ENCODE measurements at regions of chr21 and their contacts with region 1.

Region 1: DNA sequence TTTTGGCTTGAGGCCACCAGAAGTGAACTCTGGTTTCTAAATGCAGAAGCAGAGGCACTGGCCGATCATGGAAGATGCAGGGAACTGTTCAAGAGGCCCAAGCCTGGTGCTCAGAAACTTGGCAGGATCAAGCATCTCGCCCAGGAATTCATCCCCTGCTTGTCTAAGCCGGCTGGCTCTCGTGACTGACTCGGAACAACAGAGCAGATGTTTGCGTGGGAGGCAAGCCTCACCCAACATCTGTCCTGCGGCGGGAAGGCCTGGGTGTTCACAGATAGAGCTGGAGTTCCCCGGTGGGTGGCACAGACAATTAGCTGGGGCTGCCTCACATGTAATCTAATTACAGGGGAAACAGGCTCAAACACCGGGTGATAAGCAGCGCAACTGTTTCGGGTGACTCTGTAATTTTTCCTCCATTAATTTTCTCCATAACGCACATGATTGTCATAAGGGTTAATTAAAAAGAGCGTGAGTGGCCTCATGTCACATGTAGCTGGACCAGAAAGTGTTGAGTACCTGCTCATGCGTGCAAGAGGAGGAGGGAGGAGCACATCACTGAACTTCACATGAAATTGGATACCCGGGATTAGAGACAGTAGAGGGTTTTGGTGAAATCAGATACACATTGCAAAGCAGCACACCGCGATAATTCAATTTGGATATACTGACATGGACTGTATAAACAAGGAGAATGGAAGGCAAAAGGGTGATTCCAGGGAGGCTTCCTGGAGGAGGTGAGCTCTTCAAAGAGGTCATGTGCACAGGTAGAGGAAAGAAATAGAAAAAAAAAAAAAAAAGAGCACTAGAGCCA is 180.0 kb downstream of the ETS2 start:
- DNase-seq: peak; percentile 88
- H3K4me3 Mint-ChIP-seq: peak overlapping the region; percentile 69
- H3K27ac Mint-ChIP-seq: peak overlapping the region; percentile 91
- H3K4me1 Mint-ChIP-seq: peaks cover 39% of the 10 kb centered on the region
- H3K27me3 Mint-ChIP-seq: peaks cover 4% of the 10 kb centered on the region

Region 2: DNA sequence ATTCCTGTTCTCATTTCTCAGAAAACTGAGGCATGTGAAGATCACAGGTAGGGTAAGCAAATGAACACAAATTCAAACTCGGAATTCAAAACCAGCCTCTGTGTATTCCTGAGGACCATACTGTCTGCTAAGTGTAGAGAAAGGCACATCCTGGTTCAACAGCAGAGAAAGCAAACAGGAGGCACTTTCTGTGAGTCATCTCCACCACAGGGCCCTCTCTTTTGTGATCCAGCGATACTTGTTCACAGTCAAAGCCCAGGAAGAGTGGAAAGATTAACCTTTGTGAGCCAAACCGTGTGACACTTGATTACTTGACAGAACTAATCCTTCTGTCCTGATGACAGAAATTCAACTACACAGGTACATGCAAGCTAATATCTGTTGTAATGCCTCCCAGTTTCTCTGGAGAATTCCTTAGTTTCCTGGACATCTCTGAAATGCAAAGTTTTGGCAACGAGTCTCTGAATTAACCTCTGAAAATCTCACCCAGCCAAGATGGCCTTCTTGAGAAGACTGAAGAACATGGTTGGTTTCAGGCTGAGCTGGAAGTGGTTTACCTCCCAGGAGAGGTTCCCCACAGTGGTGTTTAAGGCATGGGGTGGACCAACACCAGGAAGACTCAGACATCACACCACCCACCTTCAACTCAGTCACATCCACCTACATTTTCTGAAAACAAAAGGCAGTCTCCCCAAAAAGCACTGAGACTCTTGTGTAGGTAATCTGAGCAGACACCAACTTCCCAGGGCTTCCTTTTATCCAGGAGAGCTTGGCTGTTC is 389.3 kb before region 1 on chr21:
- intact Hi-C with region 1: no loop called
- DNase-seq: no peak
- H3K4me3 Mint-ChIP-seq: no peak overlapping the region
- H3K27ac Mint-ChIP-seq: peak overlapping the region; percentile 57
- H3K4me1 Mint-ChIP-seq: peaks cover 3% of the 10 kb centered on the region
- H3K27me3 Mint-ChIP-seq: peaks cover 16% of the 10 kb centered on the region

Region 3: DNA sequence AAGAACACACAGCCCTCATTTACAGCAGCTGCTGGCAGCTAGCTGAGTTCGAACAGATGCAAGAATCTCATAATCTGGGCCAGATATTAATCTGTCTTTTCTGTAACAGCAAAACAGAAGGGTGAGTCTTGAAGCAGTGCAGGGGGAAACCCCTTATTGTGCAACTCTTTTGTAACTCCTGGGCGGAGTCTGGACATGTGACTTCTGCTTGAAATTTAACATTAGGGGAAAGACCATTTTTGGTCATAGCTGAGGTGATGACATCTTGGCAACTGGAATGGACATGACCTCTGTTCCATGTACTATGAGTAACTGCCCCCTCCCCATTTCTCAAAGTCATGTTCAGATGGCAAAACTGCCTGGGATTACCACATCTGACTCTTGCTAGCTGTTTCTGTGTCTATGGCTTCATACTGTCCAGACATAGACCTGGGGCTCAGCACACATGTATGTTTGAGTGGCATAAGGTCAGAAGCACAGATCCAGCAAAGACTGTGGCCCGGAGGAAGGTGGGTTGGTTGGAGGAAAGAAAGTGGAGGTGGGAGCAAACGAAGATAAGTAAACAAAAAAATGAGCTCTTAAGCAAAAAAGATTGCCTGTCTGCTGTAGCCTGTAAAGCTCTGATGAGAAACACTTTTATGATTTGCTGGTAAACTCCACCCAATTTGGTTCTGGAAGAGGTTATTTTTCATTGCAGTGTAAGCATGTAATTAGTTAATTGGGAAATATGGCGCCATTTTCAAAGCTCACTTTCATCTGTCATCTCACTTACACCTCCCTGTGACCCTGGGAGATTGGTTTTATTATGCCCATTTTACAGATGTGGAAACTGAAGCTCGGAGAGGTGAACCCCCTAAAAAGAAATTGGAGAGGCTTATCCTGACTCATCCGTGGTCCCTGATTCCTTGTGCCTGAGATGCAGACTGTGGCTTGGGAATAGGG is 154.0 kb before region 1 on chr21:
- intact Hi-C with region 1: loop called (anchors 10 kb)
- DNase-seq: peak; percentile 85
- H3K4me3 Mint-ChIP-seq: no peak overlapping the region
- H3K27ac Mint-ChIP-seq: peak overlapping the region; percentile 35
- H3K4me1 Mint-ChIP-seq: peaks cover 15% of the 10 kb centered on the region
- H3K27me3 Mint-ChIP-seq: peaks cover 6% of the 10 kb centered on the region

Region 4: GRCh38 chr21:38913120-38913892 is 72.5 kb before region 1 on chr21:
- intact Hi-C with region 1: loop called (anchors 2 kb)
- DNase-seq: no peak
- H3K4me3 Mint-ChIP-seq: no peak overlapping the region
- H3K27ac Mint-ChIP-seq: no peak overlapping the region
- H3K4me1 Mint-ChIP-seq: peaks cover 4% of the 10 kb centered on the region
- H3K27me3 Mint-ChIP-seq: peaks cover 11% of the 10 kb centered on the region

Region 5: GRCh38 chr21:38937844-38938742 is 47.7 kb before region 1 on chr21:
- intact Hi-C with region 1: no loop called
- DNase-seq: peak; percentile 85
- H3K4me3 Mint-ChIP-seq: peak overlapping the region; percentile 33
- H3K27ac Mint-ChIP-seq: peak overlapping the region; percentile 63
- H3K4me1 Mint-ChIP-seq: peaks cover 23% of the 10 kb centered on the region
- H3K27me3 Mint-ChIP-seq: no peaks in the 10 kb centered on the region

Region 6: GRCh38 chr21:38958940-38959691 is 26.7 kb before region 1 on chr21:
- intact Hi-C with region 1: loop called (anchors 1 kb)
- DNase-seq: peak; percentile 64
- H3K4me3 Mint-ChIP-seq: peak overlapping the region; percentile 67
- H3K27ac Mint-ChIP-seq: peak overlapping the region; percentile 95
- H3K4me1 Mint-ChIP-seq: peaks cover 29% of the 10 kb centered on the region
- H3K27me3 Mint-ChIP-seq: no peaks in the 10 kb centered on the region

Region 7: DNA sequence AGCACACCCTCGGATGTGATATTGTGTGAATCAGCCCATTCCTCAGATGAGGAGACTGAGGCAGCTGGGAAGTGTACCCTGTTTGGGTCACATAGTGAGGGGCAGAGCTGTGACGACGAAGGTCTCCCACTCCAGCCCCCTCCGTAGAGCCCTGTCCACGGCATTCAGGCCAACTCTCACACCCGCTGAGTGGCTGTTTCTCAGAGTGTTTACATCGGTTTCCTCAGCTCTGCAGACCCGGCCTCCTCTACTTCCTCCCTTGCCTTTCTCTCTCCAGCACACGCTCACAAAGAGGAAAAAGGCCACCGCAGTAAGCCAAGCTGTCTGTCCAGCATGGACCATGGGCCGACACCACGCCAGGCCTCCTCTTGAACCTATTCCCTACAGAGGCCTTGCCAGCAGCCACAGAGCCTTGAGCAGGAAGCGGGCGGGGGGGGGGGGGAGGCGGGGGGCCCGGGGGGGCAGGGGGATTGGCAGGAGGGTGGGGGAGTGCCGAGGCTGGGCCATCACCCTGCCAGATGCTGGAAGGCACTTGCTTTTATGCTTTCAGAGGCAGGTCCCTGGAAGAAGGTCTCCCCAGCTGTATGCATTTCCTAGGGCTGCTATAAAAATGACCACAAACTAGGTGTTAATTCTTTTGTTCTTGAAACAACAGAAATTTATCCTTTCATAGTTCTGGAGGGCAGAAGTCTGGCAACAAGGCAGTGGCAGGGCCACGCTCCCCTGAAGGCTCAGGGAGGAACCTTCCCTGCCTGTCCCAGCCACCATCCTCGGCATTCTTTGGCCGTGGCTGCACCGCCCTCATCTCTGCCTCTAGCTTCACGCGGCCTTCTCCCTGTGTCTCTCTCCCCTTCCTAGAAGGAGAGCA is 19.1 kb after region 1 on chr21:
- intact Hi-C with region 1: loop called (anchors 1 kb)
- DNase-seq: peak; percentile 73
- H3K4me3 Mint-ChIP-seq: peak overlapping the region; percentile 71
- H3K27ac Mint-ChIP-seq: peak overlapping the region; percentile 95
- H3K4me1 Mint-ChIP-seq: peaks cover 41% of the 10 kb centered on the region
- H3K27me3 Mint-ChIP-seq: no peaks in the 10 kb centered on the region

Region 8: DNA sequence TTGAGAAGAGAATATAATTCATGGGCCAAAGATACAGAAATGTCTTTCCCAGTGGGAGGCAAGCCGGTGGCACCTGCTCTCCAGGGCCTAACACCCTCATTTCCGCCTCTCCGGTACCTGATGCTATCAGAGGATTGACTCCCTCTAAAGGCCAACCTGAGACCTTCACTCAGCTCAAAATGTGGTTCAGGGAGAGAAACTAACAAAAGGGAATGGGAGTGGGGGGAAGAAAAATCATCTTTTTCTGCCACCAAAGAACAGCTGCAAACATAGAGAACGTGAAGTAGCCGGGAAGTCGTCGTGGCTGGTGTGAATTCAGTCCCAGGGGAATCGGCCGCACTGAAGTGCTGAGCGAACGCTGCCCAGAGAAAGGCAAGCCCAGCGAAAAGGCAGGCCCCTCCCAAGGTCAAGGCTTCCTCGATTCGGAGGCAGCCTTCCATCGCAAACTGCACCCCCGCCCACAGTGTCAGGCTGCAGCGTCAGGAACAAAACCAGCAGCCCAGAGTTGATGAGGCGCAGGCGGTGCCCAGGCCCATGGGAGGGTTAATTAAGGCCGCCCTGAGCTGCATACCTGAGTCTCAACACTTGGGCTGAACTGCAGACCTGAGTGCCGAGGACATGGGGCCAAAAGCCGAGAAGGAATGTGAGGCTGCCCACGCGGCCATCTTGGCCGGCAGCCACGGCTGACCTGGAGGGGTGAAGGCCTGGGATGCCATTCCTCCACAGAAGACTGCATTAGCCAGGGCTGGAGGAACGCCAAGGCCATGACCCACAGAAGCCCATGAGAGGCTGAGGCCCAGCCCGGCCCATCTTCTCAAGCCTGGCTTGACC is 37.3 kb after region 1 on chr21:
- intact Hi-C with region 1: no loop called
- DNase-seq: no peak
- H3K4me3 Mint-ChIP-seq: no peak overlapping the region
- H3K27ac Mint-ChIP-seq: no peak overlapping the region
- H3K4me1 Mint-ChIP-seq: no peaks in the 10 kb centered on the region
- H3K27me3 Mint-ChIP-seq: peaks cover 2% of the 10 kb centered on the region

Measured in activated CD4-positive, alpha-beta T cell treated with anti-CD3 and anti-CD28 coated beads, Interleukin-2, amount 10 ng/mL, durations not matched to agents 24 days and 14 days (primary cell).